ENCODE measurements at regions of chr12 and their contacts with region 1.

Region 1: DNA sequence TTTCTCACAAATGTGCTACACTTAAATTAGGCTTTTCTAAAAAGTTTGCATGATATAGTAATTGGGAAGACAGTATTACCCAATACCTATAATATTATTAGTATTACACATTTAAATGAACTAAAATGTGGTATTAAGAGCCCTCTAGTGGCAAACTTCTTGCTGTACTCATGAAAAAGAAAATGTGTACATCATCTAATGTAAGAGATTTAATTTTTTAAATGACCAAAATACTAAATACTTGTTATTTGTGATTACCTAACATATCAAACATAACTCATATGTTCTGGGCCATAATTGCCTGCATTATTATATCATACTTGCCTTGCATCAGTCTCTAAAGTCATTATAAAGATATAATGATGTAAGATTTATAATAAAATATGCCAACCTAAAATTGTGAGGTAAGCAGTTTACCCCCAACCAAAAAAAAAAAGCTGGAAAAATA is 64.2 kb downstream of the DNAI7 start:
- DNase-seq: peak; percentile 63
- ATAC-seq: peak; percentile 43
- H3K4me3 ChIP-seq: no peak overlapping the region
- H3K4me3 Mint-ChIP-seq: no peak overlapping the region
- H3K27ac ChIP-seq: no peak overlapping the region
- H3K27ac Mint-ChIP-seq: no peak overlapping the region
- H3K4me1 ChIP-seq: peaks cover 6 to 7% of the 10 kb centered on the region in 2 donors
- H3K4me1 Mint-ChIP-seq: peaks cover 10% of the 10 kb centered on the region
- H3K27me3 ChIP-seq: no peaks in the 10 kb centered on the region
- H3K27me3 Mint-ChIP-seq: no peaks in the 10 kb centered on the region
- CTCF ChIP-seq: peak; percentile 85

Region 2: GRCh38 chr12:23204933-23205778 is 1925.6 kb before region 1 on chr12:
- CTCF ChIA-PET with region 1: no interaction called
- POLR2A ChIA-PET with region 1: no interaction called
- intact Hi-C with region 1: loop called (anchors 10 kb)
- DNase-seq: peak; percentile 71
- ATAC-seq: peak; percentile 89
- H3K4me3 ChIP-seq: no peak overlapping the region
- H3K4me3 Mint-ChIP-seq: no peak overlapping the region
- H3K27ac ChIP-seq: no peak overlapping the region
- H3K27ac Mint-ChIP-seq: no peak overlapping the region
- H3K4me1 ChIP-seq: no peaks in the 10 kb centered on the region
- H3K4me1 Mint-ChIP-seq: no peaks in the 10 kb centered on the region
- H3K27me3 ChIP-seq: no peaks in the 10 kb centered on the region
- H3K27me3 Mint-ChIP-seq: peaks cover 22% of the 10 kb centered on the region
- CTCF ChIP-seq: peak; percentile 96

Region 3: GRCh38 chr12:24852420-24852819 is 278.3 kb before region 1 on chr12:
- CTCF ChIA-PET with region 1: interaction called, 31 read pairs
- POLR2A ChIA-PET with region 1: no interaction called
- intact Hi-C with region 1: loop called (anchors 1 kb)
- DNase-seq: no peak
- ATAC-seq: no peak
- H3K4me3 ChIP-seq: no peak overlapping the region
- H3K4me3 Mint-ChIP-seq: no peak overlapping the region
- H3K27ac ChIP-seq: no peak overlapping the region
- H3K27ac Mint-ChIP-seq: no peak overlapping the region
- H3K4me1 ChIP-seq: no peaks in the 10 kb centered on the region
- H3K4me1 Mint-ChIP-seq: no peaks in the 10 kb centered on the region
- H3K27me3 ChIP-seq: no peaks in the 10 kb centered on the region
- H3K27me3 Mint-ChIP-seq: no peaks in the 10 kb centered on the region
- CTCF ChIP-seq: peak; percentile 52

Region 4: DNA sequence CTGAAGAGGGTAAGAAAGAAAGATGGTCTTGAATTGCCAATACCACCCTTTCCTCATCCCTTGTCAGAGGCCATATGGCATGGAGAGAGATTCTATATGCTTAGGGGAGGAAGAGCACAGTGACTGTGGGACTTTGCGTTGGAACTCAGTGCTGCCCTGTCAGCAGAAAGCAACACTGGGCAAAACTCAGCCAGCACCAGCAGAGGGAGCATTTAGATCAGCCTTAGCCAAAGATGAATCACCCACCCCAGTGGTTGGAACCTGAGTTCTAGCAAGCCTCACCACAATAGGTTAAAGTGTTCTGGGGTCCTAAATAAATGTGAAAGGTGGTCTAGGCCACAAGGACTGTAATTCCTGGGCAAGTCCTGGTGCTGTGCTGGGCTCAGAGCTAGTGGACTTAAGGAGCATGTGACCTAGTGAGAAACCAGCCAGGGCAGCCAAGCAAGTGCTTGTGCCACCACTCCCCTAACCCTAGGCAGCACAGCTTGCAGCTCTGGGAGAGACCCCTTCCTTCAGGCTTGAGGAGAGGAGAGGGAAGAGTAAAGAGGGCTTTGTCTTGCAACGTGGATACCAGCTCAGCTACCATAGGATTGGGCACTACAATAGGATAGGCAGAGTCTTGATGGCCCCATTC is 170.4 kb before region 1 on chr12:
- CTCF ChIA-PET with region 1: interaction called, 5 read pairs
- POLR2A ChIA-PET with region 1: no interaction called
- intact Hi-C with region 1: loop called (anchors 1 kb)
- DNase-seq: peak; percentile 45
- ATAC-seq: peak; percentile 62
- H3K4me3 ChIP-seq: no peak overlapping the region
- H3K4me3 Mint-ChIP-seq: no peak overlapping the region
- H3K27ac ChIP-seq: no peak overlapping the region
- H3K27ac Mint-ChIP-seq: no peak overlapping the region
- H3K4me1 ChIP-seq: no peaks in the 10 kb centered on the region
- H3K4me1 Mint-ChIP-seq: peaks cover 2% of the 10 kb centered on the region
- H3K27me3 ChIP-seq: no peaks in the 10 kb centered on the region
- H3K27me3 Mint-ChIP-seq: no peaks in the 10 kb centered on the region
- CTCF ChIP-seq: peak; percentile 47

Region 5: DNA sequence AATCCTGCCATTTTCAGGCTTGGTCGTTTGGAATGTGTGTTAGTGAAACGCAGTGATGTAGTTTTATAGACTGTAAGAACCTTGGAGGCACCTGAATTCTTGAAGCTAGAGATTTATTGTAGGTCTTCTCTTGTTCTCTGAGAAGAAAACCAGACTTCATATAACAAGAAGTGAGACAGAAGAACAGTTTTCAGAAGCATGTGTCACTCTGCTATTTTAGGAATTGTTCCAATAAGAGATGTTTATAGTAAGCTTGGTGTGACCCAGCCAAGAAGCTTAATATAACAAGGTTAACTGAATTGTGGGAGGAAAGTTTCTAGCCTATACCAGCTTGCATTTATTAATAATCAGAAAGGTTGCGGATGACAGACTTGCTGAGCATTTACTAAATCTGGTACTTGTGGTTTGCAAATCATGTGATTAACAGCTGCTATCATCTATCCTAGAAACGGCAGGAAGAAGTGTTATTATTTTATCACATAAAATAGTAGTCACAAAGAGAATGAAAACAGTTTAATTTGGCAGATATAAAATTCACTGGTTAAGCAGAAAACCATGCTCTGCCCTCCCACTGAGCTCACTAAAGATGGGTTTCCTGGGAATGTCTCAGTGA is 132.7 kb before region 1 on chr12:
- CTCF ChIA-PET with region 1: interaction called, 172 read pairs
- POLR2A ChIA-PET with region 1: interaction called, 6 read pairs
- intact Hi-C with region 1: no loop called
- DNase-seq: peak; percentile 77
- ATAC-seq: peak; percentile 79
- H3K4me3 ChIP-seq: peak overlapping the region in 2 of 5 experiments; percentile 1 to 59
- H3K4me3 Mint-ChIP-seq: peak overlapping the region; percentile 64
- H3K27ac ChIP-seq: peak overlapping the region; percentile 79 to 84
- H3K27ac Mint-ChIP-seq: peak overlapping the region; percentile 85
- H3K4me1 ChIP-seq: peaks cover 74 to 76% of the 10 kb centered on the region in 2 donors
- H3K4me1 Mint-ChIP-seq: peaks cover 81% of the 10 kb centered on the region
- H3K27me3 ChIP-seq: no peaks in the 10 kb centered on the region
- H3K27me3 Mint-ChIP-seq: no peaks in the 10 kb centered on the region
- CTCF ChIP-seq: no peak

Region 6: DNA sequence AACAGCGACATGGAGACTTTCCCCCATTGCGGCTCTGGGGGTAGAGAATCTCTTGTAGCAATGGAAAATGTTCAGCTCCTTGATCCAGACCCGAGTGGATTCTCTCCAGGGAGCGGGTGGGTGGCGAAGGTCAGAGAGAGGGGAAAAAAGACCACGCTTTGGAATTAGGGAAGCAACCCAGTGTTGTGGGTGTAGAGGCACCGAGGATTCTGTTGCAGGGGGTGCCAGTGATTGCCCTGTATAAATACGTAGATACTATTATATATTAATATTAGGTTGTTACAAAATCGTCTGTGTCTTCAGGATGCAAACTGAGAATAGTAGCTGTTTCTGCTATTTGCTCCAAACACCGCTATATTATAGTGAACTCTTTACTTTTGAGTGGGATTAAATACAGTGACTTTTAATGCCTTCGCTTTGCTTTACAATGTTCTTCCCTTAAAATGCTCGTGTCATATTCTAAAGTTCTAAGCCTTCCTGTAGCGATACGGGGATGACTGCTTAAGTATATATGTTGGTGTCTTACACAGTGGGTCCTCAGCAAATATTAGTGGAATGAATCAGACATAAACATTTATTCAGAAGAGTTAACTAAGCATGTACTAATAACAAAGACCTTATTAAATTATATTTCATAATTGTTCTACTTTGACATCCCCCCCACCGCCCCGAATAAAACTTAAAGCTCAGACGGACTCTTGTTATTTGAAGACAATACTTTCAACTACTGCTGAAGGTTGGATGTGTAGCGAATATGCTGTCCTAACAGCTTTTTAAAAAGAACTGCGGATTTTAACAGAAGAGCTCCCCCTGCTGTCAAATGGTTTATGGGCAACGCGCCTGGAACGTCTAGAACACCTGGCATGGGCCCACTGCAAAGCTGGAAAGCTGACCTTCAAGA is 256.3 kb after region 1 on chr12:
- CTCF ChIA-PET with region 1: interaction called, 15 read pairs
- POLR2A ChIA-PET with region 1: no interaction called
- intact Hi-C with region 1: no loop called
- DNase-seq: peak; percentile 90
- ATAC-seq: peak; percentile 14
- H3K4me3 ChIP-seq: peak overlapping the region; percentile 68 to 97 (median 90)
- H3K4me3 Mint-ChIP-seq: peak overlapping the region; percentile 96
- H3K27ac ChIP-seq: peak overlapping the region; percentile 100
- H3K27ac Mint-ChIP-seq: peak overlapping the region; percentile 100
- H3K4me1 ChIP-seq: peaks cover 6 to 30% of the 10 kb centered on the region in 2 donors
- H3K4me1 Mint-ChIP-seq: peaks cover 41% of the 10 kb centered on the region
- H3K27me3 ChIP-seq: no peaks in the 10 kb centered on the region
- H3K27me3 Mint-ChIP-seq: no peaks in the 10 kb centered on the region
- CTCF ChIP-seq: peak; percentile 93

Region 7: DNA sequence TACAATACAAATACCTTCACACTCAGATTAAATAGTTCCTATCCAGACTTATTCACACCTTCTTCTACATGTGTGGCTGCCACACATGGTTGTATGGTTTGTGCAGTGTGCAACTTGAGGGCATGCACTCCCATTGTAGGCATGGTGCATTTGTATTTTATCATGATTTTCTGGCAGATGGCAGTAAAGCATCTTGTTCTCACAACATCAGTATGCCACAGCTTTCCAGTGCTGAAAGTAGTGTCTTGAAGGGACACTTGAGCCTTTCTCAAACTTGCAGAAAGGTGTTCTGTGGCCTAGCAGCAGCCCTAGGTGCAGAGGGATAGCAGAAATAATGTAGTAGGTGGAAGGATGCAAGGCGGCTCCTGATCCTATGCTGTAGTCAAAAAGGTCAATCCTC is 349.4 kb after region 1 on chr12:
- CTCF ChIA-PET with region 1: no interaction called
- POLR2A ChIA-PET with region 1: no interaction called
- intact Hi-C with region 1: no loop called
- DNase-seq: no peak
- ATAC-seq: no peak
- H3K4me3 ChIP-seq: no peak overlapping the region
- H3K4me3 Mint-ChIP-seq: no peak overlapping the region
- H3K27ac ChIP-seq: no peak overlapping the region
- H3K27ac Mint-ChIP-seq: no peak overlapping the region
- H3K4me1 ChIP-seq: no peaks in the 10 kb centered on the region
- H3K4me1 Mint-ChIP-seq: no peaks in the 10 kb centered on the region
- H3K27me3 ChIP-seq: no peaks in the 10 kb centered on the region
- H3K27me3 Mint-ChIP-seq: no peaks in the 10 kb centered on the region
- CTCF ChIP-seq: no peak